Mammary epithelial cell (primary cell): ENCODE measurements at regions of chr1 and their contacts with region 1.

Region 1: DNA sequence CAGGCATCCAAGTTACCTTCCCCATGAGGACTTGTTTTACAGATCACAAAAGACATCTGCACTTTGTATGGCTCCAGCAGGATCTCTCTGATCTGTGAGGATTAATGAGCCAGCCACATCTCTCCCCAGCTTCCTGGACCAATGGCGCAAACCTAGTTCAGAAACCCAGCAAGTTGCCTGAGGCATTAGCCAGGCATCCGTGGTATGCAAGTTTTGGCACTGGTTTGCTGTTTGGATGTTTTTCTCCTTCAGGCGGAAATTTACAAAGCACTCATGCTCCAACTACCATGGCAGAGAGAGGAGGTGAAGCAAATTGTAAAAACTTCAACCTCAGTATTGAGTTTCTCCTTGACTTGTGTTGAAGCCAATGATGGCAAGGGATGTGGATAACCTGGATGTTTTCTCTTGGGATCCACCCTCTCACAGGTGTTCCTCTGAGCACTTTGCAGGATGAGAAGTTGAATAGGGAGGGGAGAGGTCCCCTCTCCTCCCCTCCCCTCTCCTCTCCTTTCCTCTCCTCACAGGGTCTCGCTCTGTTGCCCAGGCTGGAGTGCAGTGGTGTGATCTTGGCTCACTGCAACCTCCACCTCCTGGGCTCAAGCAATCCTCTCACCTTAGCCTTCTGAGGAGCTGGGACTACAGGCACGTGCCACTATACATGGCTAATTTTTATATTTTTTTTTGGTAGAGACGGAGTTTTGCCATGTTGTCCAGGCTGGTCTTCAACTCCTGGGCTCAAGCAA is 25.6 kb upstream of the ENO1 start:
- DNase-seq: peak; percentile 93
- H3K4me3 ChIP-seq: no peak overlapping the region
- H3K27ac ChIP-seq: peak overlapping the region; percentile 52
- H3K4me1 ChIP-seq: peaks cover 45% of the 10 kb centered on the region
- H3K27me3 ChIP-seq: no peaks in the 10 kb centered on the region
- CTCF ChIP-seq: no peak

Region 2: GRCh38 chr1:8831340-8831739 is 72.7 kb before region 1 on chr1:
- CTCF ChIA-PET with region 1: no interaction called
- dilution Hi-C with region 1: loop called (anchors 5 kb)
- in situ Hi-C with region 1: no loop called
- intact Hi-C with region 1: no loop called
- DNase-seq: no peak
- H3K4me3 ChIP-seq: no peak overlapping the region
- H3K27ac ChIP-seq: no peak overlapping the region
- H3K4me1 ChIP-seq: no peaks in the 10 kb centered on the region
- H3K27me3 ChIP-seq: no peaks in the 10 kb centered on the region
- CTCF ChIP-seq: peak in 1 of 2 donors; percentile 16

Region 3: DNA sequence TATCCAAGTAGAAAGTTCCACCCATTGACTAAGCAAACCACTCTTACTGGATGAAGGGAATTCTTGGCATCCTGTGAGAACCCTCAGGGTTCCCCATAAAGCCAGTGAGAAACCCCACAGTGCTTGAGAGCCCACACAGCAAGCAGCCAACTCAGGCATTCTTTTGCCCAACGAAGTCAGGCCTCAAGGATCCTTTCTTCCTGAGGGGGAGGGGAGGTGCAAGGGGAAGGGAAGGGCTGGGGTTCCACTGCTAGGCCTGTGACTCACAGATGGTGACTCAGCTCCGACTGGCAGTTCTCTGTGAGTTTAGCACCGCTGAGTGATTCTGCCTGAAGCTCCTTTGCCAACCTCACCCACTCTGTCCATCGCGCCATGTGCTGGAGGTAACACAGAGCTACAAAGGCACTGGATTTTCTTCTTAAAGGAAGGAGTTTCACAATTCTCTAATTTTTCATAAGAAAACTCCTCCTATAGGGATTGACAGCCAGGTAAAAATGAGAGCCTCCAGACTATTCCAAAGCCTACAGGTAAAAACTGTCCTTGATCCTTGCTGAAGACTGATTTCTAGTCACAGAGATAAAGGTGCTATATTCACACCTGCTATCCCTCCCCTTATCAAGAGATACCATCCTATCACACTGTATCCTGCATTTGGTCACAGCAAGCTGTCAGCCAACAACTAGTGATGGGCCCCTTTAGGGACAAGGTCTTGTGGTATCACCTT is 30.4 kb before region 1 on chr1:
- CTCF ChIA-PET with region 1: no interaction called
- dilution Hi-C with region 1: no loop called
- in situ Hi-C with region 1: no loop called
- intact Hi-C with region 1: loop called (anchors 1 kb)
- DNase-seq: peak; percentile 99
- H3K4me3 ChIP-seq: peak overlapping the region in 2 of 3 experiments; percentile 4 to 35
- H3K27ac ChIP-seq: peak overlapping the region; percentile 93
- H3K4me1 ChIP-seq: peaks cover 61% of the 10 kb centered on the region
- H3K27me3 ChIP-seq: no peaks in the 10 kb centered on the region
- CTCF ChIP-seq: no peak

Region 4: DNA sequence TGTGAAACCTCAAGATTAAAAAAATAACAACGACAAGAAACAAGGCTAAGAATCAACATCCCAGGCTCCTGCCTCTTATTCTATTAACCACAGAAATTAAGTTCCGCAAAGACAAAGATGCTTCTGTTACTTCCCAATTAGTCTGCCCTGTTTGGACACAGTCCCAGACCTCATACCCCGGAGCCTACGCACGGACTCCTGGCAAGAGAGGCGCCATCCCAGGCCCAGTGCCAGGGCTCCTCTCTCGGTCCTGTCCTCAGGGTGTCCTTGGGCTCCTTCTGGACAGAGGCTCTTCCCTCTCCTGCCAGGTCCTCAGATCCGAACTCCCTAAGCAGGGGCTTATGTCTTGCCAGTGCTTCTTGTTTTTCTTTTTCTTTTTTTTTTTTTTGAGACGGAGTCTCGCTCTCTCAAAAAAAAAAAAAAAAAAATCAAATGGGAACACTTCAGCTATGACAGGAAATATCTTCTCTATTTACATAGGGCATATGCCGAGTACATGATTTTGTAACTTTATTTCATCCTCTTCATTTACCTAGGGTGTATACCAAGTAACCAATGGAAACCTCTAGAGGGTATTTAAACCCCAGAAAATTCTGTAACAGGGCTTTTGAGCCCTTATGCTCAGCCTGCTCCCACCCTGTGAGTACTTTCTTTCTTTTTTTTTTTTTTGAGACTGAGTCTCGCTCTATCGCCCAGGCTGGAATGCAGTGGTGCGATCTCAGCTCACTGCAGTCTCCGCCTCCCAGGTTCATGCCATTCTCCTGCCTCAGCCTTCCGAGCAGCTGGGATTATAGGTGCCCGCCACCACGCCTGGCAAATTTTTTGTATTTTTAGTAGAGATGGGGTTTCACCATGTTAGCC is 13.9 kb before region 1 on chr1:
- CTCF ChIA-PET with region 1: no interaction called
- dilution Hi-C with region 1: no loop called
- in situ Hi-C with region 1: no loop called
- intact Hi-C with region 1: loop called (anchors 1 kb)
- DNase-seq: peak; percentile 95
- H3K4me3 ChIP-seq: peak overlapping the region in 2 of 3 experiments; percentile 20 to 21
- H3K27ac ChIP-seq: peak overlapping the region; percentile 84
- H3K4me1 ChIP-seq: peaks cover 16% of the 10 kb centered on the region
- H3K27me3 ChIP-seq: no peaks in the 10 kb centered on the region
- CTCF ChIP-seq: no peak

Region 5: DNA sequence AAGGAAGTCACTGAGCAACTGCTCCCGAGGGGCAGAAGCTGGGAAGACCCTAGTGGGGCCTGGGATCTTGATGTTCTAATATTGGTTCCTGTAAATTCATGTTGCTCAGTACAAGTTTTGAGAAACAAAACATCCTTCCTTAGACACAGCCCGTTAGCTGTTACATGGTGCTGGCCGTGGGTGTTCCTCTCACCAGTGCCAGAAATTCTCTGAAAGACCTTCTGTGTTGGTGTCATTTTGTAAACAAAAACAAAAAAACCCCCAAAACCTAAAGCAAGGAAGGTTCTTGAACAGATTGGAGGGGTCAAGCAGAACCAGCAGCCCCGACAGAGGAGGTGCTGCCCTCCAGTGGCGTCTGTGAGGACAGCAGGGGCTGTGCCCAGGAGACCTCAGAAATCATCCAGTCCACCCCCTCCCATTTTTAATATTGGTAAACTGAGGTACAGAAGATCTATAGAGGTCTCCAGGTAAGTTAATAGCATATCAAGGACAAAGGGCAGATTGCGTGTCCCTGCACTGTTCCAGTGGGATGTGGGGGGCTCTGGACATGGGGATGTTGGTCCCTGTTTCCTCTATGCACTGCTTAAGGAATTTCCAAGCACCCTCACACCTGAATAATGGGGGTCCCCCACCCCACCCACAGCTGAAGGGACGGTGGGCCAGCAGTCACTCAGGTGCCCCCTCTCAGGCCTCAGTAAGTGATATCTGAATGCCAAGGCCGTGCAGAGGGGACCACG is 84.0 kb after region 1 on chr1:
- CTCF ChIA-PET with region 1: no interaction called
- dilution Hi-C with region 1: loop called (anchors 5 kb)
- in situ Hi-C with region 1: no loop called
- intact Hi-C with region 1: no loop called
- DNase-seq: no peak
- H3K4me3 ChIP-seq: no peak overlapping the region
- H3K27ac ChIP-seq: no peak overlapping the region
- H3K4me1 ChIP-seq: peaks cover 9% of the 10 kb centered on the region
- H3K27me3 ChIP-seq: no peaks in the 10 kb centered on the region
- CTCF ChIP-seq: peak; percentile 86 to 93

Region 6: DNA sequence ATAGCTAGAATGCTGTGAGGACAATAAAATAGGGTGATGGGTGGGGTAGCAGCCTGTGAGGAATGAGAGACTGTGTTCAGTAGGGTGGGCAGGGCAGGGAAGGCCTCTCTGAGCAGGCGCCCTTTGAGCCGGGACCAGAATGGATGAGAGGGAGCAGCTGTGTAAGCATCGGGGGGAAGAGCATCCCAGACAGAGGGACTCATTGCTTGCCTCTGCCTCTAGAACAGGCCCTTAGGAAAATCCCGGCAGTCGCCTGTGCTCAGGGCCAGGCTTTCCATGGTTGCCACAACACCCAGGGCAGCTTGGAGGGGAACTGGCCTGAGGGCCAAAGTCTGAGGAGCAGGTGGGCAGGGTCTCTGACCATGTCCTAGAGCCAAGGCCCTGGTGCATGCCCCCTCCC is 121.4 kb after region 1 on chr1:
- CTCF ChIA-PET with region 1: no interaction called
- dilution Hi-C with region 1: no loop called
- in situ Hi-C with region 1: no loop called
- intact Hi-C with region 1: no loop called
- DNase-seq: no peak
- H3K4me3 ChIP-seq: no peak overlapping the region
- H3K27ac ChIP-seq: no peak overlapping the region
- H3K4me1 ChIP-seq: no peaks in the 10 kb centered on the region
- H3K27me3 ChIP-seq: no peaks in the 10 kb centered on the region
- CTCF ChIP-seq: no peak